A673 (cell line): ENCODE measurements at regions of chr21 and their contacts with region 1.

Region 1: GRCh38 chr21:25903602-25904001 is 168.8 kb downstream of the GABPA start:
- DNase-seq: peak; percentile 77
- H3K4me3 ChIP-seq: no peak overlapping the region
- H3K27ac ChIP-seq: no peak overlapping the region
- H3K4me1 ChIP-seq: peaks cover 37% of the 10 kb centered on the region
- H3K27me3 ChIP-seq: no peaks in the 10 kb centered on the region
- CTCF ChIP-seq: no peak

Region 2: GRCh38 chr21:25967573-25968438 is 64.2 kb after region 1 on chr21:
- CTCF ChIA-PET with region 1: no interaction called
- POLR2A ChIA-PET with region 1: no interaction called
- intact Hi-C with region 1: no loop called
- DNase-seq: peak; percentile 35
- H3K4me3 ChIP-seq: no peak overlapping the region
- H3K27ac ChIP-seq: peak overlapping the region; percentile 49
- H3K4me1 ChIP-seq: peaks cover 48% of the 10 kb centered on the region
- H3K27me3 ChIP-seq: no peaks in the 10 kb centered on the region
- CTCF ChIP-seq: no peak

Region 3: GRCh38 chr21:26007951-26008498 is 104.4 kb after region 1 on chr21:
- CTCF ChIA-PET with region 1: no interaction called
- POLR2A ChIA-PET with region 1: no interaction called
- intact Hi-C with region 1: loop called (anchors 10 kb)
- DNase-seq: peak; percentile 67
- H3K4me3 ChIP-seq: peak overlapping the region; percentile 7
- H3K27ac ChIP-seq: peak overlapping the region; percentile 76
- H3K4me1 ChIP-seq: peaks cover 39% of the 10 kb centered on the region
- H3K27me3 ChIP-seq: no peaks in the 10 kb centered on the region
- CTCF ChIP-seq: no peak

Region 4: DNA sequence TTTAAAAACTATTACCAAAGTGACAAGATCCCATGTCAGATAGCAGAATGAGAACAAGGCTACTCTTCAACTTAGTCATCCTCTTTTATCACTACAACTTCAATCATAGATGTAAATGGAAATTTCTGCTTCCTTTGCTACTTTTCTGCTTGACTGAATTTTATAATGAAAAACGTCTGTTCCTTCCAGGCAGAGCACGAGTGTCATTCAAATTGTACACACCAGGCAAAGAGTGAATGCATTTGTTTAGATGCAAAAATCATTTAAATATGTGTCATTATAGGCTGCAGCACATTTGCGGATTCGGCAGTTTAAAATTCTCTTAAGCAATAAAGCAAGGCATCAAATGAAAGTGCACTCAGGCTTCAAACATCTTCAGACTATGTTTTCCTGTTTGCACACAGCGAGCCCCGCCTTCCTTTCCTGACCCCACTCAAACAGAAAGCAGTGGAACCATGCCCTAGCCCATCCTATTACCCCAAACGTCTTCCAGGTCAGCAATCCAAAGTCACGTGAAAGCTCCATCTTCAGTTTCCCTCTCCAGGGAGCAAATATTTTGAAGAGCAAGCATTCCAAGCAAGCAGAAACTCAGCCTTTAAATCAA is 167.3 kb after region 1 on chr21:
- CTCF ChIA-PET with region 1: no interaction called
- POLR2A ChIA-PET with region 1: no interaction called
- intact Hi-C with region 1: loop called (anchors 10 kb)
- DNase-seq: peak; percentile 90
- H3K4me3 ChIP-seq: peak overlapping the region; percentile 29
- H3K27ac ChIP-seq: peak overlapping the region; percentile 52
- H3K4me1 ChIP-seq: peaks cover 75% of the 10 kb centered on the region
- H3K27me3 ChIP-seq: no peaks in the 10 kb centered on the region
- CTCF ChIP-seq: no peak

Region 5: GRCh38 chr21:26165331-26165730 is 261.7 kb after region 1 on chr21:
- CTCF ChIA-PET with region 1: no interaction called
- POLR2A ChIA-PET with region 1: no interaction called
- intact Hi-C with region 1: no loop called
- DNase-seq: no peak
- H3K4me3 ChIP-seq: no peak overlapping the region
- H3K27ac ChIP-seq: no peak overlapping the region
- H3K4me1 ChIP-seq: peaks cover 58% of the 10 kb centered on the region
- H3K27me3 ChIP-seq: no peaks in the 10 kb centered on the region
- CTCF ChIP-seq: no peak

Region 6: GRCh38 chr21:26177187-26177586 is 273.6 kb after region 1 on chr21:
- CTCF ChIA-PET with region 1: interaction called, 14 read pairs
- POLR2A ChIA-PET with region 1: no interaction called
- intact Hi-C with region 1: no loop called
- DNase-seq: no peak
- H3K4me3 ChIP-seq: no peak overlapping the region
- H3K27ac ChIP-seq: no peak overlapping the region
- H3K4me1 ChIP-seq: no peaks in the 10 kb centered on the region
- H3K27me3 ChIP-seq: no peaks in the 10 kb centered on the region
- CTCF ChIP-seq: no peak